Posterior vena cava (tissue), 2 donors: ENCODE measurements at regions of chr14 and their contacts with region 1.

Region 1: GRCh38 chr14:102524466-102525218 is 15.1 kb upstream of the ANKRD9 start:
- DNase-seq: peak; percentile 100

Region 2: DNA sequence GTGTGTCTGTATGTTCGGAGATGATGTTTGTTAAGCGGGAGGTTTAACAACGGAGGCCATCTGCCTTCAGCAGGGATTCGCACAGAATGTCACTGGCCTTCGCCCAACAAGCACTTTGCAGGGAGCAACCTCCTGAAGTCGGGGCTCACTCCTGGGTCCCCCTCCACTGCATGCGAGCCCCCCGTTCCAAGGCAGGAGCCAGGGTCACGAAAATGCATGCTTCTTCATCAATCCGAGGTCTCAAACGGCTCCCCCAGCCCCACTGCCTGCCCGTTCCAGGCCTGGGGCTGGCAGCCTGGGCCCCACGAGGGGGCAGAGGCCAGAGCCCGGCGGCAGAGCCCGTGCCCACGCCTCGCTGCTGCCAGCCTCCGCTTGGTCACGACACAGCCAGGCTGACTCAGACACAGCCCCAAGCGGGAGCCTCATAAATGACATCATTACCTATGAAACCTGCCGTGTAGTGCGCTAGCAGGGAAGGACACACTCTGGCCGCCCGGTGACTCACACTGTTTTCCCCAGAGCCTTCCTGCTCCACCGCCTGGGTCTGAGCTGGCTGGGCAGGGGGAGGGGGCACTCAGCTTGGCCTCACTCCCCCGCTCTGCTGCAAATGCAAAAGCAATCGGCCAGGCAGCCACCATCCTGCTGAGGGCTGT is 1451.6 kb before region 1 on chr14:
- intact Hi-C with region 1: loop called in 1 of 2 experiments (anchors 5 kb)
- DNase-seq: peak; percentile 80

Region 3: GRCh38 chr14:102164241-102164641 is 360.4 kb before region 1 on chr14:
- intact Hi-C with region 1: no loop called
- DNase-seq: no peak

Region 4: GRCh38 chr14:102437997-102438915 is 86.4 kb before region 1 on chr14:
- intact Hi-C with region 1: loop called in 1 of 2 experiments (anchors 2 kb)
- DNase-seq: peak; percentile 96

Region 5: DNA sequence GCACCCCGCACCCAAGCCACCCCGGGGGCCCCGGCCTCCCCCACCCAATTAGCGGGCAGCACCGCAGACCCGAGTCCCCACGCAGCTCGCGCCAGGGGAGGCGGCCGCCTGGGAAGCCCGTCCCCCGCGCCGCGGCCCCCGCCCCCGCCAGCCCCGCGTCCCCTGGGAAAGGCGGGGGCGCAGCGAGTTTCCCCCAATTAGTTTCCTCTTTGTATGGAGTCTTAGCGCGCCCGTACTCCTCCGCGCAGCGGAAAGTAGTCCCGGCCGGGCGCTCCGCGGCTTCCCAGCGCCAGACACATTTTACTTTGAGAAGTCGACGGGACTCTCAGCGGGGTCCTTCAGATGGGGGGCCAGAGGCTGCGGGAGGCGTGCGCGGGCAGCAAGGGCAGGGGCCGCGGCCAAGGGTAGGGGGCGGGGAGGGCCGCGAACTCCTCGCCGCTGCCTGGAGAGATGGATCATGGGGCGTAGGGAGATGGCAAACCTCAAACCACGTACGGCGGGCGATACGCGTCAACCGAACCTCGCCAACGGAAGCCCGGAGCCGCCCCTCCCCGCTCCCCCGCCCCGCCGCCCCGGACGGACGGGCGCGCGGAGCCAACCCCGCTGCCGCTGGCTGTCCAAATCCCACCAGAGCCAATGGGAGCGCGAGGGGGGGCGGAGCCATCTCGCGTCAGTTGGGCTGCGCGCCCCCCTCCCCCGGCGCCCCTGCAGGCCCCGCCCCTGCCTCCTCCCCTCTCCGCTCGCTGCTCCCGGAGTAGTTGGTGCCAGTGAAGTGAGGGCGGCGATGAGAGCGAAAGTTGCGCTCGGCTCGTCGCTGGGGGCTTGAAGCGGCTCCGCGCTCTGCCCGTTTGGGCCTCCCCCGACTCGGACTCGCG is 67.5 kb after region 1 on chr14 and contains the start of gene RCOR1:
- intact Hi-C with region 1: loop called (anchors 5 to 10 kb)
- DNase-seq: peak; percentile 99
- total RNA-seq, gene RCOR1: 12.6 to 15.4 TPM